ENCODE measurements at regions of chr2 and their contacts with region 1.

Region 1: DNA sequence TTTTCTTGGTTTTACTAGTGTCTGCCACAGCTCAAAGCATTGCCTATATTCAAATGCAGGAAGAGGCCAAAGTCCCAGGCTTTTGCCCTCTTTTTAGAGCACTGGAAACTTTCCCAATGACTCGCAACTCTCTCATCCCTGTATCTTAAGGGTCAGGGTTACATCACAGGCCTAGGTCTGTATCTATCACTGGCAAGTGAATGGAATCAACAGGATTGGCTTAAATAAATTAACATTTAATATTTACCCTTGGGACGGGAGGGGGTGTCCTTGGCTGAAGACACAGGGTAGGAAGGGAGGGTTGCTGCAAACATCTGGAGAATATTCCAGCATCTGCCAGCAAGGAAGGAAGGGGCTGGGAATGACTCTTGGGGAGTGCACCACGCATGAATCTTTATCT is 242.6 kb downstream of the SLC4A3 start:
- DNase-seq: no peak
- ATAC-seq: peak in 5 of 8 donors; percentile 16 to 37 (median 31)
- H3K4me3 ChIP-seq: no peak overlapping the region
- H3K27ac ChIP-seq: no peak overlapping the region
- H3K4me1 ChIP-seq: no peaks in the 10 kb centered on the region
- H3K27me3 ChIP-seq: no peaks in the 10 kb centered on the region
- CTCF ChIP-seq: no peak

Region 2: GRCh38 chr2:219902891-219903552 is 33.0 kb after region 1 on chr2:
- intact Hi-C with region 1: loop called in 1 of 10 experiments (anchors 1 kb)
- DNase-seq: no peak
- ATAC-seq: no peak
- H3K4me3 ChIP-seq: no peak overlapping the region
- H3K27ac ChIP-seq: no peak overlapping the region
- H3K4me1 ChIP-seq: no peaks in the 10 kb centered on the region
- H3K27me3 ChIP-seq: no peaks in the 10 kb centered on the region
- CTCF ChIP-seq: no peak